ENCODE measurements at regions of chr12 and their contacts with region 1.

Region 1: GRCh38 chr12:108664338-108665258 is 30.9 kb upstream of the SELPLG start:
- DNase-seq: peak; percentile 91
- ATAC-seq: peak; percentile 92
- H3K4me3 ChIP-seq: peak overlapping the region; percentile 43
- H3K27ac ChIP-seq: peak overlapping the region; percentile 96
- H3K4me1 ChIP-seq: peaks cover 51% of the 10 kb centered on the region
- H3K27me3 ChIP-seq: no peaks in the 10 kb centered on the region
- CTCF ChIP-seq: peak; percentile 93 to 98 (median 97); a peak in 5 of 6 replicates
- EP300 ChIP-seq: peak; percentile 46 to 71; a peak in 3 of 4 replicates
- POLR2A ChIP-seq: peak; percentile 42; the same call in 1 of the 2 replicates
- RAD21 ChIP-seq: peak; percentile 100

Region 2: DNA sequence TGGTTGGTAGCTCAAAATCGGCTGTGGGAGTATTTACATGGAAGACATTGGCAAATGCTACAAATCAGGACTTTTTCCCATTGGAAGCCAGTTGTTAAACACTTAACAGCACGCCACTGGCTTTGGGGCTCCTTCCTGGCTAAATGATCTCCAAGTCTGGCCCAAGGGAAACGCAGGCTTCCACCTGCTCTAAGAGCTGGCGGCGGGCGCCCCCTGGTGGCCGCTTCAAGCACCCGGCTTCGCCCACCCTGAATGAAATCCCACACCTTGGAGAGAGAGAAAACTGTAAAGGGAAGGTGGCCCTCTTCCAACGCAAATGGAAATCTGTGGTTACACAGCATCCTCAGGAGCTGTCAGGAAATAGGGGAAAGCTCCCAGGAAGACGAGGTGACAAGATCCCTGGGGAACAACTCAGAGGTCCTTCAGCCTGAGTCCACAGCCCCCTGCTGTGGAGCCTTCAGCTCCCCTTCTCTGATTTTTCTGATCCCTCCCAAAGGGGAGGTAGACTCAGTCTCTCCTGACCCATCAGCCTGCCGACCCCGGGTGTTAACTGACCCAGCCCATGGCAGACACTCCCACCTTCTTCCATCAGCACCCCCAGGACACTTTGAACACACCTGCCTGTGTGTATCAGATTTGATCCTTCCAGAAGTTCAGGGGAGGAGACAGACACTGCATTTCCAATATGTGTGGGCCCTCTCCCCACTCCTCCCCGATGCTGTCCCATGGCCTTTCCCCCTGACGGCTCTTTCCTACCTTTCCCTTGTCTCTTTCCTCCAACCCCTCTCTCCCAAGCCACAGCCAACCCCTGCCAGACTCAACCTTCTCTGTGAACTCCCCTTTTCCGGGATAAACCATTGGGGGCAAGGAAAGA is 46.3 kb before region 1 on chr12:
- CTCF ChIA-PET with region 1: interaction called, 74 read pairs
- POLR2A ChIA-PET with region 1: interaction called, 7 read pairs
- RAD21 ChIA-PET with region 1: interaction called, 71 read pairs
- SMC1A ChIA-PET with region 1: interaction called, 64 read pairs
- in situ Hi-C with region 1: no loop called
- intact Hi-C with region 1: no loop called
- DNase-seq: no peak
- ATAC-seq: peak; percentile 73
- H3K4me3 ChIP-seq: no peak overlapping the region
- H3K27ac ChIP-seq: peak overlapping the region; percentile 99
- H3K4me1 ChIP-seq: peaks cover 47% of the 10 kb centered on the region
- H3K27me3 ChIP-seq: no peaks in the 10 kb centered on the region
- CTCF ChIP-seq: peak; percentile 92 to 95 (median 94)
- EP300 ChIP-seq: no peak
- POLR2A ChIP-seq: no peak
- RAD21 ChIP-seq: peak; percentile 96

Region 3: DNA sequence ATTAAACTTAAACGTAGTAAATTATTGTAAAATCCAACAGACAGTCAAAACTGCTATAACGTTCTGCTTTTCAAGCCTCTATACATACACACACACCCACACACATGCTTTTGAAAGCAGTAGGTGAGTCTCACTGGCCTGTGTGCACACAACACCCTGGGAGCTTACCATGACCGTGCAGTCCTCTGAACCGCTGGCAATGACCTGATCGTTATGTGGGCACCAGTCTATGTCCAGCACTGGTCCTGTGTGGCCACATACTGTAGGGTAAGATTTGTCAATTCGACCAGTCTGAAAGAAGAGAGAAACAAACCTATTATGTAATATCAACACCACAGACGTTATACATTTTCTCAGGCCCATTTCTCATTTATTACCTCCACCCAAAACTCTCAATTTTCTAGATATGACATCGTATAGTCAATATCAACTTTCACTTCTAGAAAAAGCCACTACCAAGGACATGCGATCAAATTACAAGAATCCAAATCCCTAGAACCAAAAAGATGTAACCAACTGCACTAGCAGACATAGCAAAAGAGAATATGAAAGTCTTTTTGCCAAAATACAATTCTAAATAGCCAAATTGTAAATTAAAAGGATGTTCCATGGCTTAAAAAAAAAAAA is 13.6 kb after region 1 on chr12:
- CTCF ChIA-PET with region 1: interaction called, 12 read pairs
- POLR2A ChIA-PET with region 1: interaction called, 8 read pairs
- RAD21 ChIA-PET with region 1: interaction called, 15 read pairs
- SMC1A ChIA-PET with region 1: interaction called, 215 read pairs
- in situ Hi-C with region 1: no loop called
- intact Hi-C with region 1: no loop called
- DNase-seq: no peak
- ATAC-seq: peak; percentile 49
- H3K4me3 ChIP-seq: no peak overlapping the region
- H3K27ac ChIP-seq: no peak overlapping the region; the same call in 1 of the 2 replicates
- H3K4me1 ChIP-seq: peaks cover 9% of the 10 kb centered on the region
- H3K27me3 ChIP-seq: no peaks in the 10 kb centered on the region
- CTCF ChIP-seq: no peak
- EP300 ChIP-seq: no peak
- POLR2A ChIP-seq: no peak
- RAD21 ChIP-seq: no peak

Region 4: GRCh38 chr12:108712165-108712924 is 47.7 kb after region 1 on chr12:
- CTCF ChIA-PET with region 1: interaction called, 15 read pairs
- POLR2A ChIA-PET with region 1: interaction called, 5 read pairs
- RAD21 ChIA-PET with region 1: interaction called, 10 read pairs
- SMC1A ChIA-PET with region 1: interaction called, 27 read pairs
- in situ Hi-C with region 1: no loop called
- intact Hi-C with region 1: no loop called
- DNase-seq: no peak
- ATAC-seq: peak; percentile 80
- H3K4me3 ChIP-seq: no peak overlapping the region
- H3K27ac ChIP-seq: peak overlapping the region; percentile 20; the same call in 1 of the 2 replicates
- H3K4me1 ChIP-seq: peaks cover 36% of the 10 kb centered on the region
- H3K27me3 ChIP-seq: no peaks in the 10 kb centered on the region
- CTCF ChIP-seq: no peak
- EP300 ChIP-seq: no peak
- POLR2A ChIP-seq: no peak
- RAD21 ChIP-seq: no peak

Region 5: GRCh38 chr12:108752387-108752786 is 87.8 kb after region 1 on chr12:
- CTCF ChIA-PET with region 1: interaction called, 12 read pairs
- POLR2A ChIA-PET with region 1: no interaction called
- RAD21 ChIA-PET with region 1: interaction called, 4 read pairs
- SMC1A ChIA-PET with region 1: interaction called, 6 read pairs
- in situ Hi-C with region 1: no loop called
- intact Hi-C with region 1: no loop called
- DNase-seq: no peak
- ATAC-seq: no peak
- H3K4me3 ChIP-seq: no peak overlapping the region
- H3K27ac ChIP-seq: no peak overlapping the region
- H3K4me1 ChIP-seq: no peaks in the 10 kb centered on the region
- H3K27me3 ChIP-seq: no peaks in the 10 kb centered on the region
- CTCF ChIP-seq: no peak
- EP300 ChIP-seq: no peak
- POLR2A ChIP-seq: no peak
- RAD21 ChIP-seq: no peak

Region 6: GRCh38 chr12:108838194-108839017 is 173.8 kb after region 1 on chr12:
- CTCF ChIA-PET with region 1: interaction called, 4 read pairs
- POLR2A ChIA-PET with region 1: no interaction called
- RAD21 ChIA-PET with region 1: interaction called, 12 read pairs
- SMC1A ChIA-PET with region 1: interaction called, 7 read pairs
- in situ Hi-C with region 1: no loop called
- intact Hi-C with region 1: no loop called
- DNase-seq: peak; percentile 91
- ATAC-seq: peak; percentile 98
- H3K4me3 ChIP-seq: no peak overlapping the region
- H3K27ac ChIP-seq: peak overlapping the region; percentile 90
- H3K4me1 ChIP-seq: peaks cover 21% of the 10 kb centered on the region
- H3K27me3 ChIP-seq: no peaks in the 10 kb centered on the region
- CTCF ChIP-seq: no peak
- EP300 ChIP-seq: peak; percentile 91 to 93
- POLR2A ChIP-seq: peak; percentile 59; the same call in 1 of the 2 replicates
- RAD21 ChIP-seq: no peak

Region 7: GRCh38 chr12:108950991-108951739 is 286.6 kb after region 1 on chr12:
- CTCF ChIA-PET with region 1: interaction called, 94 read pairs
- POLR2A ChIA-PET with region 1: no interaction called
- RAD21 ChIA-PET with region 1: interaction called, 27 read pairs
- SMC1A ChIA-PET with region 1: interaction called, 48 read pairs
- in situ Hi-C with region 1: loop called (anchors 5 kb)
- intact Hi-C with region 1: loop called (anchors 2 kb)
- DNase-seq: peak; percentile 38
- ATAC-seq: peak; percentile 97
- H3K4me3 ChIP-seq: no peak overlapping the region
- H3K27ac ChIP-seq: no peak overlapping the region
- H3K4me1 ChIP-seq: peaks cover 3% of the 10 kb centered on the region; the same call in 1 of the 2 replicates
- H3K27me3 ChIP-seq: no peaks in the 10 kb centered on the region; a peak in 1 of 4 replicates
- CTCF ChIP-seq: peak; percentile 85 to 87 (median 86)
- EP300 ChIP-seq: no peak
- POLR2A ChIP-seq: no peak
- RAD21 ChIP-seq: peak; percentile 92